ENCODE measurements at regions of chr3 and their contacts with region 1.

Region 1: GRCh38 chr3:47824541-47825473 is 21.9 kb downstream of the DHX30 start:
- DNase-seq: no peak
- H3K4me3 ChIP-seq: peak overlapping the region; percentile 82 to 96 (median 90)
- H3K27ac ChIP-seq: peak overlapping the region; percentile 81 to 89 (median 84)
- H3K4me1 ChIP-seq: peaks cover 18 to 29% (median 24%) of the 10 kb centered on the region in 4 donors
- H3K27me3 ChIP-seq: no peaks in the 10 kb centered on the region
- CTCF ChIP-seq: peak; percentile 71 to 89 (median 75)
- EP300 ChIP-seq: no peak
- POLR2A ChIP-seq: no peak

Region 2: GRCh38 chr3:47803478-47804025 is 21.3 kb before region 1 on chr3:
- intact Hi-C with region 1: loop called (anchors 2 kb)
- DNase-seq: no peak
- H3K4me3 ChIP-seq: peak overlapping the region; percentile 83 to 100 (median 96)
- H3K27ac ChIP-seq: peak overlapping the region; percentile 95 to 100 (median 100)
- H3K4me1 ChIP-seq: peaks cover 18 to 32% (median 24%) of the 10 kb centered on the region in 4 donors
- H3K27me3 ChIP-seq: no peaks in the 10 kb centered on the region
- CTCF ChIP-seq: no peak
- EP300 ChIP-seq: no peak
- POLR2A ChIP-seq: no peak

Measured in esophagus muscularis mucosa (tissue), 4 donors.